ENCODE measurements at regions of chr1 and their contacts with region 1.

Region 1: DNA sequence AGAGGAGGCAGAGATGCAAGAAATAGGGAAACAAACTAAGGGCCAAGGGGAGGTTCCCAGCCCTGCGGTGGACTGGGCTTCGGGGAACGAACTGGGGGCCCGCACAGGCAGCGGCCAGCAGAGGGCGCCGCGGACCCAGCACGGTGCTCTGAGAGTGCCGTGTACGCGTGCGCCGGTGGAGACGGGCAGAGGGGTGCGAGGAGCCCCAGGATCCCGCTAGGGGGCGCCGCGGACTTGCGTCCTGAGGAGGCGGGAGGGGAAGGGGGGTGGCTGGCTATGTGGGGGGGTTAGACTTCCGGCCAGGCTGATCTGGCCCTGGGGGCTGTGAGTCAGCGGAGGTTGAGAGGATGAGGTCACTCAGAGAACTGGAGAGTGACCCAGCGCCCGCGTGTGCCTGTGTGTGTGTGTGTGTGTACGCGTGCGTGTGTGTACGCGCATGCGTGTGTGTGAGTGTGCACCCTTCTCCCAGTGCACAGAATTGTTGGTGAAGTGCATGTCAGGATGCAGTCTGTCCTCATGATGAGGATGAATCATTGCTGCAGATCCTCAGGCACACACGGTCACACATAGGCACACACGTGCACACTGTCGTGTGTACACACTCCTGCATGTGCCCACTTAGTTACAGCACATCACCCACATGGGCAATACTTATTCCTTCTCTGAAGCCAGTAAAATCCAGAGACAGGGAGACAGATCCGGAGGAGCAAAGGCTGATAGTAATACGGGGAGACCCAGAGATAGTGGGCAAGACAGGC is 17.0 kb downstream of the NES start:
- DNase-seq: peak; percentile 97
- ATAC-seq: peak; percentile 85

Region 2: DNA sequence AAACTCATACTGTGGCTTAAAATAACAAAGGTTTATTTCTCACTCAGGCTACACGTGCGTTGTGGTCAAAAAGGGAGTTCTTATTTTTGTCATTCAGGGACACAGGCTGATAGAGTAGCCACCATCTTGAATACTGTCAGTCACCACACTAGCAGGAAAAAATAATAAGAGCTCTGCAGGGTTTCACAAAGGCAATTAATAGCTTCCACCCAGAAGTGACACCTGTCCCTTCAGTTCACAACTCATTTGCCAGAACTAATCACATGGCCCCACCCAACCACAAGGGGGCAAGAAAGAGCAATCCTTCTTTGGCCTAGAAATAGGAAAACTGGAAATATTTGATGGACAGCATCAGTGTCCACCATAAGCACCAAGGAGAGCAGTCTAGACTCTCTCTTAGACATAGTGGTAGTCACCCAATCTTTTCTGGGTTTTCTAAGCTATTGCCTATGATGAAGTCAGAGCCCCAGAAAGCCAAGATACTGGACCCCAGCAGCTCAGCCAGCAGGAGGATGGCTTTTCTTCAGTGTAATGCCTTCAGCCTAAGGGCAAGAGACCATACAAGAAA is 32.8 kb before region 1 on chr1:
- intact Hi-C with region 1: loop called (anchors 1 kb)
- DNase-seq: no peak
- ATAC-seq: no peak

Region 3: GRCh38 chr1:156677616-156678596 is 17.7 kb after region 1 on chr1:
- intact Hi-C with region 1: loop called (anchors 1 kb)
- DNase-seq: peak; percentile 81
- ATAC-seq: peak; percentile 84

Measured in Right ventricle myocardium superior (tissue), 1 donor.